ENCODE measurements at regions of chr5 and their contacts with region 1.

Region 1: DNA sequence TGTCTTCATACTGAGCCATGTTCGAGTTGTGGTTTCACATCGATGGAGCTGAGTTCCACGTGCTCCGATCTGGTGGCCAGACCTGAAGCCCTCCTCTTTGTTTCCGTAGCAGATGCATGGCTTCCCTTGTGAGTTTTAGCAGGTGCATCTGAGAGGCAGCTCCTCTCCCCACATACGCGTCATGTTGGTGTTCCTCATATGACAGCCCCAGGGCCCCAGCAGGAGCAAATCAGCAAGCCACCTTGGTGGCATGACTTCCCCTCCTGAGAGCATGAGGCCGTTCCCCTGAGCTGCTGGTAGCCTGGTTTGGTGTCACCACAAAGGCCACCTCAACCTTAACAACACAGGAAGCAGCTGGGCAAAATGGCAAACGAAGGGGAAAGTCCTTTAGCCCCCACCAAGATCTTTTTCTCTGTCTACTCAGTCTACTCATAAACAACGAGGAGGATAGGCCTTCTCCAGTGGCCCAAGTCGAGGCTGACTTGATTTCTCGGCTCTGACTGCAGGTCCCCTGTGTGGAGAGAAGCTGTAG is 5.9 kb downstream of the CYFIP2 start:
- DNase-seq: peak; percentile 98
- H3K4me3 ChIP-seq: peak overlapping the region; percentile 82
- H3K27ac ChIP-seq: peak overlapping the region; percentile 98
- H3K4me1 ChIP-seq: peaks cover 93% of the 10 kb centered on the region
- CTCF ChIP-seq: no peak

Region 2: GRCh38 chr5:155381654-155382053 is 1890.2 kb before region 1 on chr5:
- CTCF ChIA-PET with region 1: no interaction called
- POLR2A ChIA-PET with region 1: no interaction called
- intact Hi-C with region 1: no loop called
- DNase-seq: no peak
- H3K4me3 ChIP-seq: no peak overlapping the region
- H3K27ac ChIP-seq: no peak overlapping the region
- H3K4me1 ChIP-seq: no peaks in the 10 kb centered on the region
- CTCF ChIP-seq: no peak

Region 3: DNA sequence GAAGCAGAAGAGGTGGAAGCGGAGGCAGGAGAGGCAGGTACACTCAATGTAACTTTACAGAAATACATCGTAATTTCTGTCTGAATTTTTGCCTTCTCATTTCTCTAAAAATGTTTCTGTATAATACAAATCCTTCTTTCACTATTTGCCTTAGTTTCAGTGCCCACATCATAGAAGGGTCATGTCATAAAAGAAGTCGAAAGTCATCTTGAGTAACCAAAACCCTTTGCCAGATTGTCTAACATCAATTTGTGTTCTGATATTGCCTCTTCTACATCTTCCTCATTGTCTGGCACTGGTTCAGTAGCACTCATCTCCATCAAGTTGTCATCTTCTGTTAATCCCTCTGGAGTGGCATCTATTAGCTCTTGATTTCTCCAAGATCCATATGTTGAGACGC is 12.1 kb before region 1 on chr5:
- CTCF ChIA-PET with region 1: interaction called, 4 read pairs
- POLR2A ChIA-PET with region 1: interaction called, 12 read pairs
- intact Hi-C with region 1: no loop called
- DNase-seq: no peak
- H3K4me3 ChIP-seq: no peak overlapping the region
- H3K27ac ChIP-seq: no peak overlapping the region
- H3K4me1 ChIP-seq: peaks cover 15% of the 10 kb centered on the region
- CTCF ChIP-seq: no peak

Region 4: GRCh38 chr5:157283434-157283833 is 11.6 kb after region 1 on chr5:
- CTCF ChIA-PET with region 1: interaction called, 3 read pairs
- POLR2A ChIA-PET with region 1: interaction called, 64 read pairs
- intact Hi-C with region 1: loop called (anchors 1 kb)
- DNase-seq: peak; percentile 89
- H3K4me3 ChIP-seq: peak overlapping the region; percentile 14
- H3K27ac ChIP-seq: peak overlapping the region; percentile 59
- H3K4me1 ChIP-seq: peaks cover 29% of the 10 kb centered on the region
- CTCF ChIP-seq: no peak

Region 5: GRCh38 chr5:157464519-157465171 is 192.8 kb after region 1 on chr5:
- CTCF ChIA-PET with region 1: no interaction called
- POLR2A ChIA-PET with region 1: no interaction called
- intact Hi-C with region 1: no loop called
- DNase-seq: no peak
- H3K4me3 ChIP-seq: no peak overlapping the region
- H3K27ac ChIP-seq: no peak overlapping the region
- H3K4me1 ChIP-seq: no peaks in the 10 kb centered on the region
- CTCF ChIP-seq: no peak

Measured in OCI-LY7 (cell line).